ENCODE measurements at regions of chrX and their contacts with region 1.

Region 1: DNA sequence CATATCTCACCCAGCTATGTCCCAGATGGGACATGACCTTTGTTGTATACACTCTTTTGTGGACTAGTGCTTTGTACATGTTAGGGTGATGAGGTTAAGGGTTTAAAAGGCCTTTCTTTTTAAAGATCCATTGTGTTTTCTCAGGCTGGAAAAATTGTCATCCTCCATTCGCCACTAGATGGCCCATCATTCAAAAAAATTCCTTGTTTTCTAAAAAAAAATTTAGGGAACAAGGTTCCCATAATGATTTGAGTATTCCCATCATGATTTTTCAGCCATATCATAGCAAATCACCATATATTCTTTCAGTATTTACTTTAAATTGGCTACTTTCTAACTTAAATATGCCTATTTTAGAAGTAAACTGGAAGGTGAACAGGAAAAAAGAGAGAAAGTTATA is 91.9 kb upstream of the TMEM164 start:
- DNase-seq: no peak
- H3K4me3 Mint-ChIP-seq: no peak overlapping the region
- H3K27ac Mint-ChIP-seq: no peak overlapping the region
- H3K4me1 Mint-ChIP-seq: no peaks in the 10 kb centered on the region
- H3K27me3 Mint-ChIP-seq: peaks cover 18% of the 10 kb centered on the region
- CTCF ChIP-seq: no peak

Region 2: DNA sequence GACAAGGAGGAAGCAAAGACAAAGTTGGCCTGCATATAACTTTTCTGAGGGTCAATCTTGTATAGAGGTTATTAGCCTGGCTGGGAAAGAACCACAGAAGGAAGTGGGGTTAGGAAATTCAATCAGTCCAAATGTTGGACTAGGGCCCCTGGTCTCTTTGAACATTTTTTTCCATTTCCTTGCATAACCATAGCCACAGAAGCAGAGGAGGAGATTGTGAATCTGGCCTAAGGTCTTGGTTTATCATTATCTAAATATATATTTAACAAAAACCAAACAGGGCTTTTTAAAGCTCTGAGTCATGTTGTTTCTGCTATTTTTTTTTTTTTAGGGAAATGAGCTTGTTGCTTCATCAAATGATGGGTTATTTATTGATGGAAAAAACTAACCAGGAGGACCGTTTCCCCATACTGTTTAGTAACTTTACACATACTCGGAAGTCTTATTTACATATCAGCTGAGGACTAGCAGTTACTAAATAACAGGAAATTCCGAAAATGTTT is 80.3 kb before region 1 on chrX:
- CTCF ChIA-PET with region 1: no interaction called
- intact Hi-C with region 1: no loop called
- DNase-seq: peak; percentile 34
- H3K4me3 Mint-ChIP-seq: no peak overlapping the region
- H3K27ac Mint-ChIP-seq: peak overlapping the region; percentile 83
- H3K4me1 Mint-ChIP-seq: peaks cover 27% of the 10 kb centered on the region
- H3K27me3 Mint-ChIP-seq: no peaks in the 10 kb centered on the region
- CTCF ChIP-seq: no peak

Region 3: DNA sequence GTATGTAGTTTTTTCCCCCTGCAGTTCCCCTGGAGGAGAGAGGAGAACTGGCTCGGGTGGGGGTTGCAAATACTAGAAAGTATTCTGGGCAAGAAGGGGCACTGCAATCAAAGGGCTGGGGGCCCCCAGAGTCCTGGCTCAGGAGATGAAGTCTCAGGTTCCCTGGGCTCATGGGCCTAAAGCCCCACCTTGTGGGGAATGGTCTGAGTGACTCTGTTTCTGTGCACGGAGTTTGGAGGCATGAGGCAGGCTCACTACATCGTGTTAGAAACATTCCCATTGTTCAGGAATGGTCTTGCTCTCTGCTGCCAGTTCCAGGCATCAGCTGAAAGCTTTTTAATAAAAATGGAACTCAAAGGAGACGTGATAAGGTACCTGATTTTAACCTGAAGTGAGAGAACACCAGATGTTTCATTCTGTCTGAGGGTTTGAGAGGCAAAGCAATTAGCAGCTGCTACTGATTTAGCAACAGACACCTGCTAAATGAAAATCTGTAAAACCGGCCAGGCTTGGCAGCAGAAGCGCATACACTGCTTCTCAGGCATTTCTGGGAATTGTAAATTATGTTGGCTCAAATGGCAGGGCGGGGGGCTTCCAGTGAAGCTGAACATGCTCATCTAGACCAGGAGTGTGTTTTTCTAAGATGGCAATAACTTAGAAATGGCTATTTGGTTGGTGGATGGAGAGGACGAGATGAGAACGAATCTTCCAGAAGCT is 214.6 kb after region 1 on chrX:
- CTCF ChIA-PET with region 1: no interaction called
- intact Hi-C with region 1: loop called (anchors 2 kb)
- DNase-seq: peak; percentile 9
- H3K4me3 Mint-ChIP-seq: no peak overlapping the region
- H3K27ac Mint-ChIP-seq: no peak overlapping the region
- H3K4me1 Mint-ChIP-seq: peaks cover 8% of the 10 kb centered on the region
- H3K27me3 Mint-ChIP-seq: no peaks in the 10 kb centered on the region
- CTCF ChIP-seq: no peak

Region 4: GRCh38 chrX:110146521-110146920 is 235.5 kb after region 1 on chrX:
- CTCF ChIA-PET with region 1: interaction called, 8 read pairs
- intact Hi-C with region 1: loop called (anchors 1 kb)
- DNase-seq: peak; percentile 28
- H3K4me3 Mint-ChIP-seq: no peak overlapping the region
- H3K27ac Mint-ChIP-seq: no peak overlapping the region
- H3K4me1 Mint-ChIP-seq: peaks cover 6% of the 10 kb centered on the region
- H3K27me3 Mint-ChIP-seq: no peaks in the 10 kb centered on the region
- CTCF ChIP-seq: no peak

Region 5: GRCh38 chrX:110412971-110413721 is 502.1 kb after region 1 on chrX:
- CTCF ChIA-PET with region 1: no interaction called
- intact Hi-C with region 1: loop called (anchors 5 kb)
- DNase-seq: peak; percentile 73
- H3K4me3 Mint-ChIP-seq: no peak overlapping the region
- H3K27ac Mint-ChIP-seq: no peak overlapping the region
- H3K4me1 Mint-ChIP-seq: peaks cover 18% of the 10 kb centered on the region
- H3K27me3 Mint-ChIP-seq: no peaks in the 10 kb centered on the region
- CTCF ChIP-seq: peak; percentile 83

Region 6: GRCh38 chrX:110432091-110432905 is 521.3 kb after region 1 on chrX:
- CTCF ChIA-PET with region 1: no interaction called
- intact Hi-C with region 1: no loop called
- DNase-seq: no peak
- H3K4me3 Mint-ChIP-seq: no peak overlapping the region
- H3K27ac Mint-ChIP-seq: no peak overlapping the region
- H3K4me1 Mint-ChIP-seq: no peaks in the 10 kb centered on the region
- H3K27me3 Mint-ChIP-seq: peaks cover 93% of the 10 kb centered on the region
- CTCF ChIP-seq: no peak